Astrocyte of the cerebellum (primary cell): ENCODE measurements at regions of chr20 and their contacts with region 1.

Region 1: DNA sequence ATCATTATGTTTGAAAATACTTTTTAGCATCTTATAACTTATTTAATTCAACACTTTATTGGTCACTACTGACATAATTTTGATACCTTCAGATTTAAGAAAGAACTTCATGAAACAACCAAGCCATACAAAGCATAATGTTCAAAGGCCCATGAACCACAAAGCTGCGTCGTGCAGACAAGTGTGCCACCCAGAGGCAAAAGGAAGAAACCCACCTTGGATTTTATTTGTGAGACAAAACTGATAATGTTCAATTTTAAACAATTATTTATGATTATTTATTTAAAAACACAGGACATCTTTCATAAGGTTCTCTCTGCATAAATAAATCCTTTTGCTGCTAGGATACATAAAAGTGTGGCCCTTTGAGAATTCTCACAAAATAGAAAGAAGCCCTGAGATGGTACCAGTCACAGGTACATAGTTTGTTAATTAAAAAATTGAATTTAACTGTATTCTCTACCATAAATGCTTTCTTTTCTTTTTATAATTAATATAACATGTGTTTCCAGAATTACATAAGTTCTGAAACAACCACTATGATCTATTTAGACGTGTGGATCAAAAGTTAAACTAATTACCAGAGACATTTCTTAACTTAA is 143.7 kb downstream of the RALGAPA2 start:
- DNase-seq: peak; percentile 47
- H3K4me3 ChIP-seq: no peak overlapping the region
- CTCF ChIP-seq: peak; percentile 76

Region 2: GRCh38 chr20:20083807-20084206 is 484.9 kb before region 1 on chr20:
- in situ Hi-C with region 1: loop called (anchors 25 kb)
- DNase-seq: peak; percentile 8
- H3K4me3 ChIP-seq: no peak overlapping the region
- CTCF ChIP-seq: peak; percentile 21

Region 3: DNA sequence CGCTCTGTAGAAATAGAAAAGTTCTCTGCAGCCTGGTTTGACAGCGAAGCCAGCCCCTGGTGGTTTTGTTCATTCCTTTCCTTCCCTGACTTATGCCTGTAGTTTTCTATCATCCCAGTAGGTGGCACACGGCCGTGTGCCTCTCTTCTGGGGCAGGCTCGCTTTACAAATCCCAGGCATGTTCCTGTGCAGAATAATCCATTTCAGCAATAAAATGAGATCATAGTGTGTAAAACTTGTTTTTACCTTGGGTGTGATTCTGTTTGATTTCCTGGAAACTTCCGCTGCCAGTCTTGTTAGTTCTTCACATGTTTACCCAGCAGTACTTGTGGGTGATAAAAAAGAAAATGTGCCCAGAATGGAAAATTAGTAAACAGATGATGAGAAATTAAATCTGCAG is 208.2 kb before region 1 on chr20:
- in situ Hi-C with region 1: loop called (anchors 25 kb)
- DNase-seq: peak; percentile 33
- H3K4me3 ChIP-seq: no peak overlapping the region
- CTCF ChIP-seq: peak; percentile 94

Region 4: DNA sequence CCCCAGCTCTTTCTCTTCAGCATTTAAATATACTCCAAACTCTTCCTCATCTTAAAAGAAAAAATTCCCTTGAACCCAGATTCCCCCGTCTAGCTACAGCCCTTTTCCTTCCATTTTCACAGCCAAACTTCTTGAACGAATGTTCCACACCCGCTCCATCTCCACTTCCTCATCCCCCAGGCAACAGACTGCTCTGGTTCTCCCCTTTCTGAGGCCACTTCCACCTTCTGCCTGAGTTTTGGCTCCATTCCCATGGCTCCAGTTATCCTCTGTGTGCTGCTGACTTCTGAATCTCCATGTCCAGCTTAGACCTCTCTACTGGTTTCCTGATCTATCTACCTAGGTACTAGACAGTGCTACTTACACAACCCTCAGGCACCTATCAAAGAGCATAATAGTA is 37.3 kb after region 1 on chr20:
- in situ Hi-C with region 1: no loop called
- DNase-seq: no peak
- H3K4me3 ChIP-seq: no peak overlapping the region
- CTCF ChIP-seq: no peak

Region 5: GRCh38 chr20:20624914-20625313 is 56.2 kb after region 1 on chr20:
- in situ Hi-C with region 1: no loop called
- DNase-seq: no peak
- H3K4me3 ChIP-seq: no peak overlapping the region
- CTCF ChIP-seq: no peak

Region 6: GRCh38 chr20:20668639-20669038 is 99.9 kb after region 1 on chr20:
- in situ Hi-C with region 1: no loop called
- DNase-seq: no peak
- H3K4me3 ChIP-seq: no peak overlapping the region
- CTCF ChIP-seq: no peak